ENCODE measurements at regions of chr13 and their contacts with region 1.

Region 1: GRCh38 chr13:80889829-80890228 is 548.9 kb upstream of the SPRY2 start:
- DNase-seq: no peak
- H3K4me3 ChIP-seq: no peak overlapping the region
- H3K27ac ChIP-seq: no peak overlapping the region
- H3K4me1 ChIP-seq: no peaks in the 10 kb centered on the region
- H3K27me3 ChIP-seq: no peaks in the 10 kb centered on the region
- CTCF ChIP-seq: no peak
- POLR2A ChIP-seq: no peak

Region 2: GRCh38 chr13:80903911-80904310 is 14.1 kb after region 1 on chr13:
- CTCF ChIA-PET with region 1: no interaction called
- POLR2A ChIA-PET with region 1: no interaction called
- dilution Hi-C with region 1: no loop called
- intact Hi-C with region 1: loop called (anchors 2 kb)
- DNase-seq: no peak
- H3K4me3 ChIP-seq: no peak overlapping the region
- H3K27ac ChIP-seq: no peak overlapping the region
- H3K4me1 ChIP-seq: no peaks in the 10 kb centered on the region
- H3K27me3 ChIP-seq: no peaks in the 10 kb centered on the region
- CTCF ChIP-seq: no peak
- POLR2A ChIP-seq: no peak

Measured in endothelial cell of umbilical vein (primary cell).